Naive thymus-derived CD4-positive, alpha-beta T cell (primary cell): ENCODE measurements at regions of chr12 and their contacts with region 1.

Region 1: GRCh38 chr12:1795785-1796514 is 24.4 kb upstream of the LRTM2 start:
- DNase-seq: peak; percentile 89 to 98 (median 93)
- ATAC-seq: peak; percentile 97
- H3K4me3 ChIP-seq: peak overlapping the region; percentile 74
- H3K4me3 Mint-ChIP-seq: peak overlapping the region; percentile 85 to 95 (median 93)
- H3K27ac ChIP-seq: peak overlapping the region; percentile 80
- H3K27ac Mint-ChIP-seq: peak overlapping the region; percentile 82 to 97 (median 91)
- H3K4me1 ChIP-seq: peaks cover 6 to 13% of the 10 kb centered on the region in 2 donors
- H3K4me1 Mint-ChIP-seq: peaks cover 10 to 24% (median 19%) of the 10 kb centered on the region in 7 donors
- H3K27me3 ChIP-seq: no peaks in the 10 kb centered on the region
- H3K27me3 Mint-ChIP-seq: no peaks in the 10 kb centered on the region

Region 2: GRCh38 chr12:359091-359490 is 1436.9 kb before region 1 on chr12:
- CTCF ChIA-PET with region 1: no interaction called
- POLR2A ChIA-PET with region 1: no interaction called
- intact Hi-C with region 1: no loop called
- DNase-seq: no peak
- ATAC-seq: no peak
- H3K4me3 ChIP-seq: no peak overlapping the region
- H3K4me3 Mint-ChIP-seq: no peak overlapping the region
- H3K27ac ChIP-seq: no peak overlapping the region
- H3K27ac Mint-ChIP-seq: no peak overlapping the region
- H3K4me1 ChIP-seq: no peaks in the 10 kb centered on the region
- H3K4me1 Mint-ChIP-seq: peaks cover 8 to 32% (median 25%) of the 10 kb centered on the region in 7 donors
- H3K27me3 ChIP-seq: no peaks in the 10 kb centered on the region
- H3K27me3 Mint-ChIP-seq: no peaks in the 10 kb centered on the region

Region 3: DNA sequence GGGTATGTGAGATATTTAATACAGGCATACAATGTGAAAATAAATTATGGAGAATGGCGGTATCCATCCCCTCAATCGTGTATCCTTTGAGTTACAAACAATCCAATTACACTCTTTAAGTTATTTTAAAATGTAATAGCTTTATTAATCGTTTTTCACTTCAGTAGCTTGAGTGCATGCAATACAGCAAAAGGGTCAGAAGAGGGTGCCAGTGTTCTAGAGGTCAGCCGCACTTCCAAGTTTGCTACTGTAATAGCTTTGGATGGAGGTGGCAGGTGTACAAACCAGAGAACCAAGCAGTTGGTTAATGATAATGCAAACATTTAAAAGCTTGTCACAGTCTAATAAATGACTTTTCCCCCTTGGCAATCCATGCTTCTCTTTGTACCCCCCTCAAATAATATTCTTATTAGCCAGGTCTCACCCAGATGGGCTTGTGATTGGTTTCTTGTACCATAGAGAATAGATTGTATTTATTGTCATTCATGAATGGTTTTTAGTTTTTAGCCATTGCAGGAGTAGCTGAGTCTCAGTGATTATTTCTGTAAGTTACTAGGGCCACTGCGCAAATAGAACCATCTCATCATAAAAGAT is 677.9 kb before region 1 on chr12:
- CTCF ChIA-PET with region 1: interaction called, 4 read pairs
- POLR2A ChIA-PET with region 1: no interaction called
- intact Hi-C with region 1: loop called in 1 of 2 experiments (anchors 2 kb)
- DNase-seq: peak; percentile 25 to 70 (median 63)
- ATAC-seq: peak; percentile 74
- H3K4me3 ChIP-seq: no peak overlapping the region
- H3K4me3 Mint-ChIP-seq: no peak overlapping the region
- H3K27ac ChIP-seq: no peak overlapping the region
- H3K27ac Mint-ChIP-seq: no peak overlapping the region
- H3K4me1 ChIP-seq: peaks cover 4 to 7% of the 10 kb centered on the region in 2 donors
- H3K4me1 Mint-ChIP-seq: peaks cover 7 to 16% (median 9%) of the 10 kb centered on the region in 7 donors
- H3K27me3 ChIP-seq: no peaks in the 10 kb centered on the region
- H3K27me3 Mint-ChIP-seq: no peaks in the 10 kb centered on the region

Region 4: DNA sequence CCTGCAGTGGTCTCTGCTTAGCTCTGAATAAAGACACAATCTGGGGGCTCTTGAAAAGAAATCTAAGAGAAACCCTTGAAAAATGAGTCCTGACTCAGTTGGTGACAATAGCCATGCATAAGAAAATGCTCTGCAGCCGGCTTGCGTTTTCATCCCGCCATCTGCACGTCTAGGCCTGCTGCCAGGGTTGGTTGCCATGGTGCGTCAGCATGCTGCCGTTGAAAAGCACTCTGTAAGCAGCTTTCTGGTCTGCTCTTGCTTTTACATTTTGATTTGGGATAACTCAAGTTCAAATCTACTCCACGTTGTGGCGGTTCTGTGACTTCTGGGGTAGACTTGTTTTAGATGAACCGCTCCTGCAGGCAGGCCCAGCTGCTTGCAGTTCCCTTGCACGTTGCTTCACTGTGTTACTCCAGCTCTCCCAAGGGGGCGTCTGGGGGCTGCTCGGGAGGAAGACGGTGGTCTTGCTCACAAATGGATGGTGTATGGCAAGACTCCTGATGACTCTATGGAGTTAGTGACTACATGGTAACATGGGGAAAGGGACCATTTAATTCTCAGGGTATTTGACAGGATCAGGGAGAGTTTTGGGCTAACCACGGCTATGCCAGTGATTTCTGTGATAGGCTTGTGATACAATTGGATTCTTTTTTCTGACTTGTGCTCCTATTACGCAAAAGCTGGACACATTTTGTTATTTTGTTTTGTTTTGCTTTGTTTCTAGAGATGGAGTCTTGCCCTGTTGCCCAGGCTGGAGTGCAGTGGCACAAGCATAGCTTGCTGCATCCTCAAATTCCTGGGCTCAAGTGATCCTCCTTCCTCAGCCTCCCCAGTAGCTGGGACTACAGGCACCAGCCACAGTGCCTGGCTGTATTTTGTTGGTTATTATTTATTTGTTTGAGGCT is 151.2 kb before region 1 on chr12:
- CTCF ChIA-PET with region 1: interaction called, 278 read pairs
- POLR2A ChIA-PET with region 1: interaction called, 7 read pairs
- intact Hi-C with region 1: no loop called
- DNase-seq: no peak
- ATAC-seq: no peak
- H3K4me3 ChIP-seq: no peak overlapping the region
- H3K4me3 Mint-ChIP-seq: peak overlapping the region in 1 of 10 donors; percentile 40
- H3K27ac ChIP-seq: no peak overlapping the region
- H3K27ac Mint-ChIP-seq: no peak overlapping the region
- H3K4me1 ChIP-seq: no peaks in the 10 kb centered on the region
- H3K4me1 Mint-ChIP-seq: peaks cover 0 to 7% (median 0%) of the 10 kb centered on the region in 7 donors
- H3K27me3 ChIP-seq: no peaks in the 10 kb centered on the region
- H3K27me3 Mint-ChIP-seq: peaks cover 0 to 25% (median 7%) of the 10 kb centered on the region in 5 donors

Region 5: DNA sequence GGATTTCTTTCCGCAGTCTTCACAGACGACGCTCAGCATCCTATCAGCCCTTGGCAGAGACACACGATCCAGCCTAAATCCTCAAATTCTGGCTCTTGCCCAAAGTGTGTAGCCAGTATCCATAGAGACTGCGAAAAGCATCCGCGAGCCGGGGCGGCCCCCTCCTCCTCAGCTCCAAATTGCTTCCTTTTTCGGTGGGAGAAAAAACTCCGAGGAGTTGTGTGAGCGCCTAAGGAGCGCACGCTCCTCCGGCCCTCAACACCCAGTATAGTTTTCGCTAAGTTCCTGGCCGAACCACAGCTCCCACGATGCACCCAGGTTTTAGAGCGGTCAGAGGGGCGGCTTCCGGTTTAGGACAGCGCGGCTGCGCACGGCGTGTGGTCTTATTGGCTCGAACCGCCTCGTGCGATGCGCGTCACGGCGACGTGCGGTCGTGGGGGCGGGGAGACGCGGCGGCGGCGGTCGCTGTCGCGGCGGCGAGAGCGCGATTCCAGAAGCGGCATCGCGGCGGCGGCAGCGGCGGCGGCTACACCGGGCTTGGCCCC is 105.3 kb before region 1 on chr12 and contains the start of gene ADIPOR2:
- CTCF ChIA-PET with region 1: interaction called, 3 read pairs
- POLR2A ChIA-PET with region 1: interaction called, 4 read pairs
- intact Hi-C with region 1: loop called (anchors 1 kb)
- DNase-seq: peak; percentile 91 to 96 (median 95)
- ATAC-seq: peak; percentile 99
- H3K4me3 ChIP-seq: peak within 1 kb of the TSS; percentile 76
- H3K4me3 Mint-ChIP-seq: peak within 1 kb of the TSS; percentile 94 to 99 (median 98)
- H3K27ac ChIP-seq: peak within 1 kb of the TSS; percentile 91
- H3K27ac Mint-ChIP-seq: peak within 1 kb of the TSS; percentile 96 to 100 (median 98)
- H3K4me1 ChIP-seq: peaks cover 7 to 9% of the 10 kb centered on the region in 2 donors
- H3K4me1 Mint-ChIP-seq: peaks cover 26 to 59% (median 52%) of the 10 kb centered on the region in 7 donors
- H3K27me3 ChIP-seq: no peaks in the 10 kb centered on the region
- H3K27me3 Mint-ChIP-seq: peaks cover 0 to 13% (median 0%) of the 10 kb centered on the region in 5 donors
- total RNA-seq, gene ADIPOR2: 19.8 to 51.4 (median 36.4) TPM

Region 6: GRCh38 chr12:1766115-1766514 is 29.8 kb before region 1 on chr12:
- CTCF ChIA-PET with region 1: no interaction called
- POLR2A ChIA-PET with region 1: no interaction called
- intact Hi-C with region 1: no loop called
- DNase-seq: no peak
- ATAC-seq: no peak
- H3K4me3 ChIP-seq: no peak overlapping the region
- H3K4me3 Mint-ChIP-seq: no peak overlapping the region
- H3K27ac ChIP-seq: no peak overlapping the region
- H3K27ac Mint-ChIP-seq: peak overlapping the region in 1 of 9 donors; percentile 40
- H3K4me1 ChIP-seq: no peaks in the 10 kb centered on the region
- H3K4me1 Mint-ChIP-seq: peaks cover 5 to 29% (median 22%) of the 10 kb centered on the region in 7 donors
- H3K27me3 ChIP-seq: no peaks in the 10 kb centered on the region
- H3K27me3 Mint-ChIP-seq: no peaks in the 10 kb centered on the region

Region 7: GRCh38 chr12:2004113-2004929 is 208.4 kb after region 1 on chr12 and contains the start of gene DCP1B:
- CTCF ChIA-PET with region 1: no interaction called
- POLR2A ChIA-PET with region 1: interaction called, 3 read pairs
- intact Hi-C with region 1: loop called (anchors 1 kb)
- DNase-seq: peak; percentile 76 to 93 (median 90)
- ATAC-seq: peak; percentile 99
- H3K4me3 ChIP-seq: peak within 1 kb of the TSS; percentile 80
- H3K4me3 Mint-ChIP-seq: peak within 1 kb of the TSS; percentile 92 to 100 (median 97)
- H3K27ac ChIP-seq: peak within 1 kb of the TSS; percentile 80
- H3K27ac Mint-ChIP-seq: peak within 1 kb of the TSS; percentile 93 to 99 (median 97)
- H3K4me1 ChIP-seq: peaks cover 10 to 18% of the 10 kb centered on the region in 2 donors
- H3K4me1 Mint-ChIP-seq: peaks cover 15 to 44% (median 36%) of the 10 kb centered on the region in 7 donors
- H3K27me3 ChIP-seq: no peaks in the 10 kb centered on the region
- H3K27me3 Mint-ChIP-seq: peaks cover 0 to 6% (median 0%) of the 10 kb centered on the region in 5 donors
- total RNA-seq, gene DCP1B: 8.1 to 19.7 (median 15.5) TPM

Region 8: DNA sequence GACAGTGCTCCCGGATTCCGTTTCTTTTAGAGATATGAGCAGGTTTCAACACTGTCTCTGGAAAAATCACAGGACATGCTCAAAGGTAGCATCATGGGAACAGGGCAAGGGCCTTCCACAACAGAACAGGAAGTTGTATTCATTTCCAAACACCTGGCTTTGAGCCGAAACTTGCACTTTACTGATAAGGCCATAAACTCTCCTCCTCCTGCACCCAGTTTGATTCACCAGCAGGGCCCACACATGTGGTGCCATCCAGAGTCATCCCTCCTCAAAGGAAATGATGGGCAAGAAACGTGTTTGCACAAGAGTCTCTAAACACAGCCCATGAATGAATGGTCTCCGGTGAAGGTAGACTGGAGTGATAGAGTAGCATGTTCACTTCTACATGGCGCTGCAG is 730.4 kb after region 1 on chr12:
- CTCF ChIA-PET with region 1: no interaction called
- POLR2A ChIA-PET with region 1: no interaction called
- intact Hi-C with region 1: no loop called
- DNase-seq: no peak
- ATAC-seq: no peak
- H3K4me3 ChIP-seq: no peak overlapping the region
- H3K4me3 Mint-ChIP-seq: no peak overlapping the region
- H3K27ac ChIP-seq: no peak overlapping the region
- H3K27ac Mint-ChIP-seq: no peak overlapping the region
- H3K4me1 ChIP-seq: no peaks in the 10 kb centered on the region
- H3K4me1 Mint-ChIP-seq: peaks cover 0 to 14% (median 0%) of the 10 kb centered on the region in 7 donors
- H3K27me3 ChIP-seq: no peaks in the 10 kb centered on the region
- H3K27me3 Mint-ChIP-seq: peaks cover 0 to 11% (median 4%) of the 10 kb centered on the region in 5 donors

Region 9: GRCh38 chr12:2583091-2583497 is 787.1 kb after region 1 on chr12:
- CTCF ChIA-PET with region 1: no interaction called
- POLR2A ChIA-PET with region 1: no interaction called
- intact Hi-C with region 1: loop called in 1 of 2 experiments (anchors 5 kb)
- DNase-seq: peak in 7 of 9 donors; percentile 1 to 77 (median 26)
- ATAC-seq: peak; percentile 67
- H3K4me3 ChIP-seq: no peak overlapping the region
- H3K4me3 Mint-ChIP-seq: peak overlapping the region in 1 of 10 donors; percentile 16
- H3K27ac ChIP-seq: no peak overlapping the region
- H3K27ac Mint-ChIP-seq: no peak overlapping the region
- H3K4me1 ChIP-seq: no peaks in the 10 kb centered on the region
- H3K4me1 Mint-ChIP-seq: peaks cover 0 to 5% (median 3%) of the 10 kb centered on the region in 7 donors
- H3K27me3 ChIP-seq: peaks cover 0 to 4% of the 10 kb centered on the region in 2 donors
- H3K27me3 Mint-ChIP-seq: peaks cover 38 to 55% (median 42%) of the 10 kb centered on the region in 5 donors

Region 10: DNA sequence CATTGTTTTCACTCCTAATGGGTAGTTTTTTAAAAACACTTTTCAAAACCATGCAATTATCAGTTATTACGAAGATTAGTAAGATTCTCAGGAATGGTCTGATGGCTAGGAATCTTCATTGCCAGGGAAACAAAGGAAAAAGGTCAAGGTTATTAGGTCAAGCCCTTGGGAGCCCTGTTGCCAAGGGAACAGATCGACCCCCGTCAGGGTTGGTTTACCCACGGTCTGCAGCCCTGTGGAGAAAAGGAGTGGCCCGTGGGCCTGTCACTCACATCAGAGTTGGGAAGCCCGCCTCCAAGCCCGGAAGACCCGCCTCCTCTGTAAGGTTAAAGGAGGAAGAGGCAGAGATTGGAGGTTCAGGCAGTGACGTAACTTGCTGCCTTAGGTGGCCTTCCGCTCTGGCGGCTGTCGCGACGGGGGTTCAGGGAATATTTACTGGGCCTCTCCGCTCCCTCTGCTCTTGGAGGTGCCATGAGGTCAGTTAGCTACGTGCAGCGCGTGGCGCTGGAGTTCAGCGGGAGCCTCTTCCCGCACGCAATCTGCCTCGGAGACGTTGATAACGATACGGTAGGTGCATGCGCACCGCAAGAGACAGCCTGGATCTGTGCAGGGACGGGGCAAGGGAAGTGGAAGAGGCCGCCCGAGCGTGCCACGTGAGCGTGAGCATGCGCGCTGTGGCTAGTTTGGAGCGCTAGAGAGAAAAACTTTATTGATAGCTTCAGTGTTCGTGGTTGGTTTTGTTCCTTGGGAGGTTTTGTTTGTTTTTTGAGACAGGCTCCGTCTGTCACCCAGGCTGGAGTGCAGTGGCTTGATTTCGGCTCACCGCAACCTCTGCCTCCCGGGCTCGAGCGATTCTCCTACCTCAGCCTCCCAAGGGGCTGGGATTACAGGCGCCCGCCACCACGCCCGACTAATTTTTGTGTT is 1016.6 kb after region 1 on chr12 and contains the start of gene ITFG2:
- CTCF ChIA-PET with region 1: no interaction called
- POLR2A ChIA-PET with region 1: no interaction called
- intact Hi-C with region 1: loop called in 1 of 2 experiments (anchors 1 kb)
- DNase-seq: peak; percentile 83 to 98 (median 98)
- ATAC-seq: peak; percentile 97
- H3K4me3 ChIP-seq: peak within 1 kb of the TSS; percentile 97
- H3K4me3 Mint-ChIP-seq: peak within 1 kb of the TSS; percentile 81 to 100 (median 99)
- H3K27ac ChIP-seq: peak within 1 kb of the TSS; percentile 88
- H3K27ac Mint-ChIP-seq: peak within 1 kb of the TSS; percentile 97 to 100 (median 100)
- H3K4me1 ChIP-seq: peaks cover 5 to 15% of the 10 kb centered on the region in 2 donors
- H3K4me1 Mint-ChIP-seq: peaks cover 20 to 41% (median 38%) of the 10 kb centered on the region in 7 donors
- H3K27me3 ChIP-seq: no peaks in the 10 kb centered on the region
- H3K27me3 Mint-ChIP-seq: no peaks in the 10 kb centered on the region
- total RNA-seq, gene ITFG2: 50.4 to 156 (median 95.6) TPM